ENCODE measurements at regions of chr9 and their contacts with region 1.

Region 1: GRCh38 chr9:117411548-117411947 is 3.3 kb downstream of the ASTN2 start:
- DNase-seq: no peak
- ATAC-seq: peak in 2 of 4 donors; percentile 33 to 44
- H3K4me3 ChIP-seq: no peak overlapping the region
- H3K27ac ChIP-seq: no peak overlapping the region
- H3K4me1 ChIP-seq: peaks cover 0 to 28% (median 5%) of the 10 kb centered on the region in 12 donors
- H3K27me3 ChIP-seq: peaks cover 23 to 63% (median 42%) of the 10 kb centered on the region in 9 donors
- CTCF ChIP-seq: peak in 11 of 12 donors; percentile 23 to 58 (median 43)
- POLR2A ChIP-seq: no peak

Region 2: DNA sequence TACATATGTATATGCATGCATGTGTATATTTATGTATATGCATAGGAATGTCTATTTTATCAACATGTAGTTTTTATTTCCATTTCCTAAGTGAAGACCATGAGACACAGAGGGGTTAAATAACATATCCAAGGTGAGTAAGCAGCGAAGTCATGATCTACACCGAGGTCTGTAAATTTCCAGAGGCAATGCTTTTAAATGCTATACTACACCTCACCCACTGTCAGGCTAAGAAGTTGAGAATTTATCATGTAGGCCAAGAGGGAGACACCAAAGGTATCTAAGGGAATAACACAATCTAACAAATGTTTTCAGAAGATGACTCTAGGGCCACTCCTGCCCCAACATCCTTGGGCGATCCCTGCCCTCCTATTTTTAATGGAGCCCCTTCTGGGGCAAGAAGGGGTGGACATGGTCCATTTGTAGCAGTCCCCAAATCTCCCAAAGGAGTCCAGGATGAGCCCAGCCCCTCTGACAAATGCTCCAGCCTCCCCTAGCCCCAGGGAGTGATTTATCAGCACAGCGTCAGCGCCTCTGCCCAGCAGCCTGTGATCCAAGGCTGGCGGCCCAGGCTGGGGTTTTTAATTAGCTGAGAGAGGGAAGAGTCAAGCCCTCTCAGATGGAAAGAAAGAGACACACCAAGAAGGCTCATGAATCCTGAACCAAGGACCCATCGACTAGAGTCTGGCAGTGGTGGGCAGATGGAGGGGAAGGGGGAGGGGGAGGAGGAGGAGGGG is 336.6 kb before region 1 on chr9:
- intact Hi-C with region 1: loop called in 1 of 10 experiments (anchors 5 kb)
- DNase-seq: no peak
- ATAC-seq: no peak
- H3K4me3 ChIP-seq: no peak overlapping the region
- H3K27ac ChIP-seq: no peak overlapping the region
- H3K4me1 ChIP-seq: no peaks in the 10 kb centered on the region
- H3K27me3 ChIP-seq: peaks cover 0 to 12% (median 0%) of the 10 kb centered on the region in 9 donors
- CTCF ChIP-seq: no peak
- POLR2A ChIP-seq: no peak

Region 3: DNA sequence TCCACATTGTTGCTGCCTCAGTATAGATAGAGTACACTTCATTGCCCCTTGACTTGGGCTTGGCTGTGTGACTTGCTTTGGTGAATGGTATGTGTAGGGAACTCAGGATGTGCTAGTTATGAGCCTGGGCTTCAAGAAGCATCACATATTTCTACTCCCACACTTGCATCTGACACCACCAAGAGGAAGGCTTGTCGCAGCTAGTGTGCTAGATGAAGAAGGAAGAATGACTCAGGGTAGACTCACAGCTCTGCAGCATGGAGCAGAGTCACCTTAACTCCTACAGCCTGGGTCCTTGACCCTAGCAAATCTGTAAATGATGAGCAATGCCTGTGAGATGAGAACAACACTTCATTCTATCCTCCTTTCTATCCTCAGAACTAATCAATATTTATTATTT is 258.5 kb before region 1 on chr9:
- intact Hi-C with region 1: loop called in 3 of 10 experiments (anchors 5 to 10 kb)
- DNase-seq: no peak
- ATAC-seq: no peak
- H3K4me3 ChIP-seq: no peak overlapping the region
- H3K27ac ChIP-seq: no peak overlapping the region
- H3K4me1 ChIP-seq: no peaks in the 10 kb centered on the region
- H3K27me3 ChIP-seq: peaks cover 0 to 2% (median 0%) of the 10 kb centered on the region in 9 donors
- CTCF ChIP-seq: no peak
- POLR2A ChIP-seq: no peak

Region 4: GRCh38 chr9:117160254-117160653 is 251.3 kb before region 1 on chr9:
- intact Hi-C with region 1: loop called in 5 of 10 experiments (anchors 5 to 10 kb)
- DNase-seq: no peak
- ATAC-seq: no peak
- H3K4me3 ChIP-seq: no peak overlapping the region
- H3K27ac ChIP-seq: no peak overlapping the region
- H3K4me1 ChIP-seq: no peaks in the 10 kb centered on the region
- H3K27me3 ChIP-seq: no peaks in the 10 kb centered on the region
- CTCF ChIP-seq: peak in 4 of 12 donors; percentile 7 to 31 (median 16)
- POLR2A ChIP-seq: no peak

Region 5: GRCh38 chr9:117189121-117189520 is 222.4 kb before region 1 on chr9:
- intact Hi-C with region 1: no loop called
- DNase-seq: no peak
- ATAC-seq: no peak
- H3K4me3 ChIP-seq: no peak overlapping the region
- H3K27ac ChIP-seq: no peak overlapping the region
- H3K4me1 ChIP-seq: no peaks in the 10 kb centered on the region
- H3K27me3 ChIP-seq: peaks cover 0 to 4% (median 0%) of the 10 kb centered on the region in 9 donors
- CTCF ChIP-seq: no peak
- POLR2A ChIP-seq: no peak

Region 6: DNA sequence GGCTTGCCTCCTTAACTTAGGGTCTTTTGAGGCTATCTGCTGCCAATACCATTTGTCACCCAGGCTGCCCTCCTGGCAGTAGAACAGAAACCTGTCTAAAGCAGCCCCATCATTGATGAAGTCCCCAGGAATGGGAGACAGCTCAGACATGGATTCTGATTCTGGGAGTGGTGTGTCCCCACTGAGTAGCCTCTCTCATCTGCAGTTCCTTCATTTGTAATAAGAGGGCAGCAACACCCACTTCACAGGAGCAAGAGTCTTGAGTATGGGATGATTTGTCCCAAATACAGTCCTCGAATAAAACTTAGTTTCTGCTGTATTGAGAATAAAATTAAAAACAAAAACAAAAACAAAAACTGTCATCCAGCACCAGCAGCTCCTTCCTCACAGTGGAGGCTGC is 164.3 kb before region 1 on chr9:
- intact Hi-C with region 1: loop called in 2 of 10 experiments (anchors 2 to 10 kb)
- DNase-seq: no peak
- ATAC-seq: no peak
- H3K4me3 ChIP-seq: no peak overlapping the region
- H3K27ac ChIP-seq: no peak overlapping the region
- H3K4me1 ChIP-seq: no peaks in the 10 kb centered on the region
- H3K27me3 ChIP-seq: peaks cover 0 to 8% (median 0%) of the 10 kb centered on the region in 9 donors
- CTCF ChIP-seq: peak in 7 of 12 donors; percentile 10 to 50 (median 35)
- POLR2A ChIP-seq: no peak

Measured in heart left ventricle (tissue), 16 donors.